Calu3 (cell line): ENCODE measurements at regions of chr3 and their contacts with region 1.

Region 1: DNA sequence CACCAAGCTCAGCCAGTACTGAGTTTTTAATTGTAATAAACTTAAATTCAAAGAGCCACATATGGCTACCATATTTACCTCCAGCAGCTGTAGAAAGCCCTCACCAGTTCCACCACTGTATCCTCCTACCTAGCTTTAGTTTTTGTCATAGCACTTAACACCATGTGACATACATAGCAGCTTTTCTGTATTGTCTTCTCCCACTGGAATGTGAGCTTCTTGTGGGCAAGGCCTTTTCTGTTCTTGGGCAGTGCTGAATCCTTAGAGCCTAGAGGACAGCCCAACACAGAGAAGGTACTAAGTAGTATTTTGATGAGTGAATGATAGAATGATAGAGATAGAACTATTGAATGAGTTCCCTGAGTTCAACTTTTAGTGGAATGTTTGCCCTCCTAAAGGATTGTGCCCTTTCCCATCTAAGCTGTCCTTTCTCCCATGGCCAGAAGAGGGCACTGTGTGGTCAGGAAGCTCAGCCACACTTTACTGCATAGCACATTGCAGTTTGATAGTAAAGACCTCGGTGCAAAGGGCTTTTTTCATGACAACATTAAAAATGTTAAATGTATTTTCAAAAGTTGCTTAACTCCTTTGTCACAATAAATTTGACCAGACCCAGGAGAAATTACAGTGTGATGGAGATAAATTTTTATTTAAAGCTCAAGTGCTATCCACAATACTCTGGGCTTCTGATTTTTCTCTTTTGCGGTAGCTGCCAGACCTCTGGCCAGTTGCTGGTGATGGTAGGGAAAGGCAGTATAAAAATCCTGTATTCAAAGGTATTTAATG is 115.8 kb downstream of the GHSR start:
- DNase-seq: peak; percentile 79
- H3K4me3 Mint-ChIP-seq: no peak overlapping the region
- H3K27ac Mint-ChIP-seq: peak overlapping the region; percentile 27
- H3K4me1 Mint-ChIP-seq: peaks cover 25% of the 10 kb centered on the region
- H3K27me3 Mint-ChIP-seq: no peaks in the 10 kb centered on the region
- CTCF ChIP-seq: peak; percentile 86

Region 2: DNA sequence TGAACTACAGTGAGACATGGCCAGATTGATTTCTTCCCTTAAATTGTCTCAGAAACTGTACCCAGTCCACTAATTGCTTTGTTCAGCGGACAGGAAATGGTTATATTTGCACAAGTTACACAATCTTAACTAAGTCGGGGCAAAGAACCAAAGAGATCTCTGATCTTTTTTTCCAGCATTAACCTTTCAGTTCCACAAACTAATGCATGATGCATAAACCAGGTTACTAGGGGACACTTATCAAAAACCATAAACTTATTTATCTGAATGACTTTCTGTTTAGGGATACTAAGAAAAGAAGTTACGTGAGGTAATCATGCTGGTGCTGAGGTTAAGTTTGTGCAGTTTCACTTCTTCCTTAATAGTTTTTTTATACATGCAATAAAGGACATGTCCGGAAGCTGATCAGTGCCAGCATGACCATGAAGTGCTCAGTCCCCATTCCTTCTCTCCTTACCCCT is 270.7 kb before region 1 on chr3:
- CTCF ChIA-PET with region 1: no interaction called
- intact Hi-C with region 1: loop called (anchors 5 kb)
- DNase-seq: no peak
- H3K4me3 Mint-ChIP-seq: peak overlapping the region; percentile 39
- H3K27ac Mint-ChIP-seq: peak overlapping the region; percentile 51
- H3K4me1 Mint-ChIP-seq: peaks cover 87% of the 10 kb centered on the region
- H3K27me3 Mint-ChIP-seq: no peaks in the 10 kb centered on the region
- CTCF ChIP-seq: no peak

Region 3: GRCh38 chr3:172315401-172316091 is 16.9 kb before region 1 on chr3:
- CTCF ChIA-PET with region 1: interaction called, 12 read pairs
- intact Hi-C with region 1: no loop called
- DNase-seq: peak; percentile 58
- H3K4me3 Mint-ChIP-seq: peak overlapping the region; percentile 37
- H3K27ac Mint-ChIP-seq: peak overlapping the region; percentile 75
- H3K4me1 Mint-ChIP-seq: peaks cover 83% of the 10 kb centered on the region
- H3K27me3 Mint-ChIP-seq: no peaks in the 10 kb centered on the region
- CTCF ChIP-seq: no peak